MCF 10A (cell line): ENCODE measurements at regions of chr1 and their contacts with region 1.

Region 1: DNA sequence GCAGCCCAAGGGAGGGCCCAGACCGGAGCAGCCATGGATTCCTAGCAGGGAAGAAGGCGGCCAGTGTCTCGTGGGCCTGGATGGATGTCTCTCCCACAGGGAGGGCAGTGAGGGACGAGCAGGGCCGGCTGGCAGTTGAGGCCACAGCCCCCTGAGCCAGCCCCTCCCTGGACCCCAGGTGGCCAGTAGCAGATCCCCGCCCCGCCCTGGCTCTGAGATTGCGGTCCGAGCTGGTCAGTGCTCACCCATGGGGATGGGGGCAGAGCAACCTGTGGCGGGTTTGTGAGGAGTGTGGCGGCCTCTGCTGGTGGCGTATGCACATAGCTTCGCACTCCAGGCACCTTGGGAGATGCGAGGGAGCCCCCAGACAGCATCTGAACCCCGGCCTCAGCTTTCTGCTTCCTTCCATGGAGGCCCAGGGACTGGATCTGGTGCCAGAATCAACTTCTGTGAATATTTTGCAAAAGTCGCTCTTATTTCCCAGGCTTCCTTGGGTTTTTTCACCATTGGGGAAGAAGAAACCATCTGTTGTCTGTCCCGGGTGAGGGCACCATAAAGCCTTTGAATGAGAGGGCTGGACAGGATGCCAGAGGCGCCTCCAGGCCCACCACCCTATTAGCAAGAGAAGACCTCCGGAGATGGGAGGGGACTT is 8.4 kb upstream of the KCNN3 start:
- DNase-seq: peak; percentile 81
- H3K4me3 Mint-ChIP-seq: no peak overlapping the region
- H3K27ac Mint-ChIP-seq: no peak overlapping the region
- H3K4me1 Mint-ChIP-seq: peaks cover 14% of the 10 kb centered on the region
- H3K27me3 Mint-ChIP-seq: no peaks in the 10 kb centered on the region
- CTCF ChIP-seq: peak; percentile 97

Region 2: GRCh38 chr1:154371436-154371835 is 507.1 kb before region 1 on chr1:
- CTCF ChIA-PET with region 1: no interaction called
- POLR2A ChIA-PET with region 1: no interaction called
- intact Hi-C with region 1: no loop called
- DNase-seq: no peak
- H3K4me3 Mint-ChIP-seq: no peak overlapping the region
- H3K27ac Mint-ChIP-seq: no peak overlapping the region
- H3K4me1 Mint-ChIP-seq: no peaks in the 10 kb centered on the region
- H3K27me3 Mint-ChIP-seq: no peaks in the 10 kb centered on the region
- CTCF ChIP-seq: no peak

Region 3: GRCh38 chr1:154533952-154534844 is 344.3 kb before region 1 on chr1:
- CTCF ChIA-PET with region 1: interaction called, 3 read pairs
- POLR2A ChIA-PET with region 1: no interaction called
- intact Hi-C with region 1: loop called (anchors 1 kb)
- DNase-seq: peak; percentile 76
- H3K4me3 Mint-ChIP-seq: no peak overlapping the region
- H3K27ac Mint-ChIP-seq: no peak overlapping the region
- H3K4me1 Mint-ChIP-seq: no peaks in the 10 kb centered on the region
- H3K27me3 Mint-ChIP-seq: peaks cover 40% of the 10 kb centered on the region
- CTCF ChIP-seq: peak; percentile 81

Region 4: GRCh38 chr1:154751690-154752089 is 126.8 kb before region 1 on chr1:
- CTCF ChIA-PET with region 1: no interaction called
- POLR2A ChIA-PET with region 1: no interaction called
- intact Hi-C with region 1: no loop called
- DNase-seq: peak; percentile 54
- H3K4me3 Mint-ChIP-seq: no peak overlapping the region
- H3K27ac Mint-ChIP-seq: no peak overlapping the region
- H3K4me1 Mint-ChIP-seq: no peaks in the 10 kb centered on the region
- H3K27me3 Mint-ChIP-seq: peaks cover 84% of the 10 kb centered on the region
- CTCF ChIP-seq: no peak

Region 5: GRCh38 chr1:154765970-154766369 is 112.5 kb before region 1 on chr1:
- CTCF ChIA-PET with region 1: interaction called, 3 read pairs
- POLR2A ChIA-PET with region 1: no interaction called
- intact Hi-C with region 1: loop called (anchors 1 kb)
- DNase-seq: peak; percentile 62
- H3K4me3 Mint-ChIP-seq: no peak overlapping the region
- H3K27ac Mint-ChIP-seq: no peak overlapping the region
- H3K4me1 Mint-ChIP-seq: no peaks in the 10 kb centered on the region
- H3K27me3 Mint-ChIP-seq: peaks cover 47% of the 10 kb centered on the region
- CTCF ChIP-seq: peak; percentile 37

Region 6: DNA sequence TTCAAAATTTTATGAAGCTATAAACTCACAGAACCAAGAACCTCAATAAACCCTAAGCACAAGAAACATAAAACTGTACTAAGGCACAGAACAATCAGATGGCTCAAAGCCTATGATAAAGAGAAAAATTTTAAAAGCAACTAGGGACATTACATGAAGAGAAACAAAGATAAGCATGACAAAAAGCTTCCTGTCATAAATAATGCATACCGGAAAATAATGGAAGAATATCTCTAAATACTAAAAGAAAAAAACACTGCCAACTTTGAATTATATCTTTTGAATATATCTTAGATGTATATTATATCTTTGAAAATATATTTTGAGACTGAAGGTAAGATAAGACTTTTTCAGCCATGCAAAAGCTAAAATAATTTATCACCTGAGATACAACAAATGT is 13.0 kb after region 1 on chr1:
- CTCF ChIA-PET with region 1: interaction called, 32 read pairs
- POLR2A ChIA-PET with region 1: no interaction called
- intact Hi-C with region 1: no loop called
- DNase-seq: no peak
- H3K4me3 Mint-ChIP-seq: no peak overlapping the region
- H3K27ac Mint-ChIP-seq: no peak overlapping the region
- H3K4me1 Mint-ChIP-seq: no peaks in the 10 kb centered on the region
- H3K27me3 Mint-ChIP-seq: peaks cover 61% of the 10 kb centered on the region
- CTCF ChIP-seq: no peak

Region 7: GRCh38 chr1:154970631-154971340 is 92.3 kb after region 1 on chr1 and contains the start of gene SHC1:
- CTCF ChIA-PET with region 1: no interaction called
- POLR2A ChIA-PET with region 1: no interaction called
- intact Hi-C with region 1: no loop called
- DNase-seq: peak; percentile 99
- H3K4me3 Mint-ChIP-seq: no peak within 1 kb of the TSS
- H3K27ac Mint-ChIP-seq: no peak within 1 kb of the TSS
- H3K4me1 Mint-ChIP-seq: peaks cover 40% of the 10 kb centered on the region
- H3K27me3 Mint-ChIP-seq: no peaks in the 10 kb centered on the region
- CTCF ChIP-seq: no peak
- total RNA-seq, gene SHC1: 667 and 885 TPM in 2 replicates